Activated naive CD4-positive, alpha-beta T cell treated with anti-CD3 and anti-CD28 coated beads for 36 hours (primary cell): ENCODE measurements at regions of chr17 and their contacts with region 1.

Region 1: GRCh38 chr17:8118769-8119580 is 661 bp upstream of the ALOXE3 start:
- DNase-seq: peak; percentile 91
- H3K4me3 Mint-ChIP-seq: peak overlapping the region; percentile 84
- H3K27ac Mint-ChIP-seq: peak overlapping the region; percentile 95
- H3K4me1 Mint-ChIP-seq: peaks cover 48% of the 10 kb centered on the region
- H3K27me3 Mint-ChIP-seq: peaks cover 36% of the 10 kb centered on the region

Region 2: DNA sequence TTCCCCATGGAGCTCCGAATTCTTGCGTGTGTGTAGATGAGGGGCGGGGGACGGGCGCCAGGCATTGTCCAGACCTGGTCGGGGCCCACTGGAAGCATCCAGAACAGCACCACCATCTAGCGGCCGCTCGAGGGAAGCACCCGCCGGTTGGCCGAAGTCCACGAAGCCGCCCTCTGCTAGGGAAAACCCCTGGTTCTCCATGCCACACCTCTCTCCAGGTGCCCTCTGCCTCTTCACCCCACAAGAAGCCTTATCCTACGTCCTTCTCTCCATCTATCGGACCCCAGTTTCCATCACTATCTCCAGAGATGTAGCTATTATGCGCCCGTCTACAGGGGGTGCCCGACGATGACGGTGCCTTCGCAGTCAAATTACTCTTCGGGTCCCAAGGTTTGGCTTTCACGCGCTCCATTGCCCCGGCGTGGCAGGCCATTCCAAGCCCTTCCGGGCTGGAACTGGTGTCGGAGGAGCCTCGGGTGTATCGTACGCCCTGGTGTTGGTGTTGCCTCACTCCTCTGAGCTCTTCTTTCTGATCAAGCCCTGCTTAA is 557.9 kb before region 1 on chr17:
- CTCF ChIA-PET with region 1: no interaction called
- intact Hi-C with region 1: no loop called
- DNase-seq: peak; percentile 89
- H3K4me3 Mint-ChIP-seq: peak overlapping the region; percentile 87
- H3K27ac Mint-ChIP-seq: peak overlapping the region; percentile 84
- H3K4me1 Mint-ChIP-seq: peaks cover 57% of the 10 kb centered on the region
- H3K27me3 Mint-ChIP-seq: no peaks in the 10 kb centered on the region

Region 3: DNA sequence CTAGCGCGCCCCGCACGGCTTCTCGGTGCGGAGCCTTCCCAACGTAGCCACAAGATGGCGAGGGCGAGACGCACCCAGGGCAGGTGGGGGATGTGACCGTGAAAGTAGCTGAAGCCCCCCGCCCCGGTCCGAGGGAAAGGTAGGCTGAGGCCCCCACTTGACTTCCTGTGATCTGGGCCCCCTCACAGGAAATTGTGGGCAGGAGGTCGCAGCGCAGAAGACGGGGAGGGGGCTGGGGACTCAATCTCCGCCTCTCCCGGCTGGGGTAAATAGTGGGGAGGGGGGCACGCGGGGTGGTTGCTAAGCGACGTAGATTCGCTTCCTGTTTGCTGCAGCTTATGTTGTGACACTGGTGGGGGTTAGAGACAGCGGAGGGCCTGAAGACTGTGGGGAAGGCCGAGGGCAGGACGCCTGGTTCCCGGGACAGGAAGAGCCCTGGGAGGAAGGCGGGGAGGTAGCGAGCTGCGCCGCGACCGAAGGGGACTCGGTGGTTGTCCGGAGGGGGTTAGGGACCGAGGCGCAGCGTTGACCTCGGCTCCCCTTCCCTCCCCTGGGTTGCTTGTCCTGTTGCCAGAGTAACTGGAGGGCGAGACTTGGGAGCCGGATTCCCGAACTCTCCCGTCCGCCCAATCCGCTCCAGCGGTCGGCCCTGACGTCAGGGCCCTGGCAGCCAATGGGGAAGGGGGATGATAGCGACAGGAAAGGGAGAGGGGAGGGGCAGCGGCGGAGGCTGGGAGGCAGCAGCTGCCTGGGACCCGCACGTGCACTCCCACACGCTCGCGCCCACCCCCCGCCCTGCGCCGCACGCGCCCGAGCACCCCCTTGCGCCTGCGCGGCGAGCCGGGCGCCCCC is 283.8 kb before region 1 on chr17:
- CTCF ChIA-PET with region 1: no interaction called
- intact Hi-C with region 1: loop called (anchors 2 kb)
- DNase-seq: peak; percentile 94
- H3K4me3 Mint-ChIP-seq: peak overlapping the region; percentile 93
- H3K27ac Mint-ChIP-seq: peak overlapping the region; percentile 94
- H3K4me1 Mint-ChIP-seq: peaks cover 44% of the 10 kb centered on the region
- H3K27me3 Mint-ChIP-seq: no peaks in the 10 kb centered on the region

Region 4: DNA sequence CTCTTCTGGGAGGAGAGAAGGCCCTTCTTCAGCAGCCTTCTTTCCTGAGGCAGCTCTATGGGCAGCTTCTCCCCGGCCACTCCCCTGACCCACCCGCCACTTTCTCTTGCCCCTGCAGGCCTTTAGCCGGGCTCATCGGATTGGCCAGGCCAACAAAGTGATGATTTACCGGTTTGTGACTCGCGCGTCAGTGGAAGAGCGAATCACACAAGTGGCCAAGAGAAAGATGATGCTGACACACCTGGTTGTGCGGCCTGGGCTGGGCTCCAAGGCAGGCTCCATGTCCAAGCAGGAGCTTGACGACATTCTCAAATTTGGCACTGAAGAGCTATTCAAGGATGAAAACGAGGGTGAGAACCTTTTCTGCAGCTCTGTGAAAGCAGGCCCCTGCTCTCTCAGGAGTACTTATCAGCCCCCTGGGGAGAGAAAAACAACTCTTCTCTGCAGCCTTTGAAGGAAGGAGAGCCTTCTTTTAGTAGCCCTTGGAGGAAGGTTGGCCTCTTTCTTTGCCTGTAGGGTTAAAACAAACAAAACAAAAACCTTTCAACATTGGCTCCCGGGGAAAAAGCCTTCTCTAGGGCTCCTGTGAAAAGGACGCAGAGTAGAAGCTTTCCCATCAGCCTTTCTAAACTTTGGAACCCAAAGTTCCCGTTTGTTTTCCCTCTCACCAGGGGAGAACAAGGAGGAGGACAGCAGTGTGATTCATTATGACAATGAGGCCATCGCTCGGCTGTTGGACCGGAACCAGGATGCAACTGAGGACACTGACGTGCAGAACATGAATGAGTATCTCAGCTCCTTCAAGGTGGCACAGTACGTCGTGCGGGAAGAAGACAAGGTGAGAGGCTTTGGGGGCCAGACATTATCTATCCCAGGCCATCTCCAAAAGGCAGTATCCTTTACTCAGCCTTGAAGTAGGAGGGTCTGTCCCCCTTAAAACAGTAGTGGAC is 215.5 kb before region 1 on chr17:
- CTCF ChIA-PET with region 1: no interaction called
- intact Hi-C with region 1: no loop called
- DNase-seq: no peak
- H3K4me3 Mint-ChIP-seq: no peak overlapping the region
- H3K27ac Mint-ChIP-seq: no peak overlapping the region
- H3K4me1 Mint-ChIP-seq: no peaks in the 10 kb centered on the region
- H3K27me3 Mint-ChIP-seq: no peaks in the 10 kb centered on the region

Region 5: GRCh38 chr17:7931709-7932482 is 187.1 kb before region 1 on chr17 and contains the starts of genes CNTROB and TRAPPC1:
- CTCF ChIA-PET with region 1: interaction called, 6 read pairs
- intact Hi-C with region 1: loop called (anchors 1 kb)
- DNase-seq: peak; percentile 100
- H3K4me3 Mint-ChIP-seq: peak within 1 kb of the TSS; percentile 91
- H3K27ac Mint-ChIP-seq: peak within 1 kb of the TSS; percentile 87
- H3K4me1 Mint-ChIP-seq: peaks cover 38% of the 10 kb centered on the region
- H3K27me3 Mint-ChIP-seq: no peaks in the 10 kb centered on the region
- total RNA-seq, gene CNTROB: 49.3 to 56.3 TPM
- total RNA-seq, gene TRAPPC1: 162 to 172 TPM

Region 6: DNA sequence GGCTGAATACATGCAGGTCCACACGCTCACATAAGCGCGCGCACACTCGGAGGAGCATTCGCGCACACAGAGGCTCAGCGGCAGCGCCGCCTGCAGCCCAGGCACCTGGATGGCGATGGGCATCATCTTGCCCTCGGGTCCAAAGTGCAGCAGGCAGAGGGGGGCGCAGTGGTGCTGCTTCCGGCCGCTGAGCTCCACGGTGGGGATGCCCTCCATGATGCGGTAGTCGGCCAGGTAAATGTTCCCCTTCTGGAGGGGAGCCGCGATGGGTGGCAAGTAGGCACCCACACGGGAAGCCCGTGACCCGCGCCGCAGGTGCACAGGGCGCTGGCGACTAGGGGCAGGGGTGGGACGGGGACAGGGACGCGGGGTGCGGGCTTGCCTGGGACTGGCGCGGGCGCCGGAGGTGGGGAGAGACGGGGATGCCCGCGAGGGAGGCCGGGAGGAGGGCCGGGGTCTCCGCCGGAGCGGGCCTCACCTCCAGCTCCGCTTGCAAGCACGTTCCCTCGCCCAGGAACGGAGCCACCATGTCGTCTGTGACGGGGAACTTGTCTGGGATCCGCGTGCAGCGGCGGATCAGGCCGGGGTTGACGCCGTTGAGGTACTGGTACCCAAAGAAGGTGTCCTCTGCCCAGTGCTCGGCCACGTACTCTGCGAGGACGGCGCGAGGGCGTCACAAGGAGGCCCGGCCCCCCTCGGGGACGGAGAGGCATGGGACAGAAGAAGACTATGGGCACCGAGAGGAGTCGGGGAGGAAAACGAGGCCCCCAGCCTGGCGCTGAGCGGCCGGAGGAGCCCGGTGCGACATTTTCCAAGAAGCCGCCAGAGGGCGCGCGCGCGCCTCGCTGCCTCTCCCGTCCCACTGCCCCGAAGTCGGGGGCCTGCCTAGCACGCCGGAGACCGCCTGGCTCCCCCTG is 39.4 kb before region 1 on chr17:
- CTCF ChIA-PET with region 1: interaction called, 36 read pairs
- intact Hi-C with region 1: loop called (anchors 1 kb)
- DNase-seq: peak; percentile 91
- H3K4me3 Mint-ChIP-seq: peak overlapping the region; percentile 95
- H3K27ac Mint-ChIP-seq: peak overlapping the region; percentile 88
- H3K4me1 Mint-ChIP-seq: peaks cover 13% of the 10 kb centered on the region
- H3K27me3 Mint-ChIP-seq: peaks cover 2% of the 10 kb centered on the region

Region 7: DNA sequence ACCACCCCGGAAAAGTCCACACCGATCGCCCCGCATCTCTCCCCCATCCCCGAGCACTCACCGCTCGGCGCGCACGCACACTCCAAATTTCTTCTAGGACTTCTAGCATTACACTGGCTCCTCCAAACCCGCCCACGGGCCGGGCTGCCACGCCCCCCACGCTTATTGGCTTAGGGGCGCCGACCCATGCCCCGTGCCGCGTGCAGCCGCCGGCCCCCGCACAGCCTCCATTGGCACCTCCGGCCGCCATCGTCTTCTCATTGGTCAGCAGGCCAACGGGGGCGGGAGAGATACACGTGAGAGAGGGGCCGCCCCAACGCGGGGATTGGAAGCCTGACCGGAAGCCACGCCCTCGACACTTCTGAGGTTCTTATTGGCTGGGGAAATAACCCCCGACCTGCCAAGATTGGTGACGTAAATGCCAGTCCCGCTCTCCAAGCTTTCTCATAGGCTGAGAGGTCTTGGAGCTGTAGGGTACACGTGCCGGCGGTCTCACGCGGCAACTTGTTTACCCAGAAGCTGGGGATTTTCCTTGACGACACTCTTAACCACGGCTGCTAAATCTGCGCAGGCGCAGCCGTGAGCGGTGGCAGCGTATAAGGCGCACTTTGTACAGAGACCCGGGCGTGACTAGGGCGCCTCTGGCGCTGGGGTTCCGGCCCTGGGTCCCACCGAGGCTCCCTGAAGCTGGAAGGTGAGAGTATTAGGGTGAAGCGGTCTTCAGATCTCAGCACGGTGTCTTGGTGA is 37.4 kb after region 1 on chr17:
- CTCF ChIA-PET with region 1: interaction called, 9 read pairs
- intact Hi-C with region 1: loop called (anchors 1 kb)
- DNase-seq: peak; percentile 100
- H3K4me3 Mint-ChIP-seq: no peak overlapping the region
- H3K27ac Mint-ChIP-seq: no peak overlapping the region
- H3K4me1 Mint-ChIP-seq: peaks cover 62% of the 10 kb centered on the region
- H3K27me3 Mint-ChIP-seq: no peaks in the 10 kb centered on the region

Region 8: GRCh38 chr17:8248751-8249607 is 130.0 kb after region 1 on chr17 and contains the start of gene PFAS:
- CTCF ChIA-PET with region 1: interaction called, 10 read pairs
- intact Hi-C with region 1: loop called (anchors 1 kb)
- DNase-seq: peak; percentile 97
- H3K4me3 Mint-ChIP-seq: peak within 1 kb of the TSS; percentile 99
- H3K27ac Mint-ChIP-seq: peak within 1 kb of the TSS; percentile 100
- H3K4me1 Mint-ChIP-seq: peaks cover 37% of the 10 kb centered on the region
- H3K27me3 Mint-ChIP-seq: no peaks in the 10 kb centered on the region
- total RNA-seq, gene PFAS: 106 to 110 TPM

Region 9: DNA sequence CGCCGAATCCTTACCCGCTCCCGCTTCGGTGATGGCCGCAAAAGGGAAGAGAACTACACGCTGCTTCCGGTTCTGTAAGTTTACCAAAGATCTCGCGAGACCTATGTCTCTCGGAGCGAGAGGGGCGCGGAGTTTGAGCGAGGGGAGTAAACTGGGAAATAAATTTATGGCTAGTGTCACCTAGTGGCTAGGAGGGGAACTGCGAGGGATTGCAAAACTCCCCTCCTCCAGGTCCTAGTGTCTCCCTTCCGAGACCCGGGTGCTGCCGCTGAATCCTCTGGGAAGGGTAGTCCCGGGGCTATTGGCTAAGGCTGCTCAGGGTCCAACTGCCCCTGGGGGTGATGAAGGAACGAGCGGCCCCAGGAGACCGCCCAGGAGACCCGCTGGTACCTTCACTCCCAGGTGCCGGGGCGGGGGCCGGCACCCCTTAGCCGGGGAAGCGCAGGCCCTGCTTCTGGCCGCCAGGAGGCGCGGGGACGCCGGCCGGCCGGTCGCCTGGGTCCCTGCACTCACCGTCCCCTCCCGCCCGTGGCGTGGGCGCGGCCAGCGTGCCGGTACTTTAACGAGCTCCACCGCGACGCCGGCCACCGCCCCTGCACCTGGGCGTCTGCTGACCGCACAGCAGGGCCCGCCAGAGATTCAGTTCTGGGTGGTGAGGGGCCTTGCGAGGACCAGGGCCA is 264.3 kb after region 1 on chr17 and contains the start of gene RPL26:
- CTCF ChIA-PET with region 1: no interaction called
- intact Hi-C with region 1: loop called (anchors 5 kb)
- DNase-seq: peak; percentile 98
- H3K4me3 Mint-ChIP-seq: peak within 1 kb of the TSS; percentile 99
- H3K27ac Mint-ChIP-seq: peak within 1 kb of the TSS; percentile 98
- H3K4me1 Mint-ChIP-seq: peaks cover 57% of the 10 kb centered on the region
- H3K27me3 Mint-ChIP-seq: no peaks in the 10 kb centered on the region
- total RNA-seq, gene RPL26: 3,652 to 3,827 TPM